Left lung (tissue), 14 donors: ENCODE measurements at regions of chr22 and their contacts with region 1.

Region 1: GRCh38 chr22:31630331-31631329 is 31.4 kb downstream of the PISD start:
- DNase-seq: peak; percentile 57 to 96 (median 83)
- ATAC-seq: peak; percentile 75
- H3K4me3 ChIP-seq: peak overlapping the region; percentile 46 to 78
- H3K27ac ChIP-seq: peak overlapping the region; percentile 89 to 94
- H3K4me1 ChIP-seq: peaks cover 29 to 89% of the 10 kb centered on the region in 2 donors
- H3K27me3 ChIP-seq: no peaks in the 10 kb centered on the region
- CTCF ChIP-seq: no peak

Region 2: GRCh38 chr22:31556627-31557203 is 73.9 kb before region 1 on chr22:
- intact Hi-C with region 1: loop called in 1 of 2 experiments (anchors 5 kb)
- DNase-seq: peak in 1 of 4 donors; percentile 13
- ATAC-seq: peak; percentile 48
- H3K4me3 ChIP-seq: no peak overlapping the region
- H3K27ac ChIP-seq: no peak overlapping the region
- H3K4me1 ChIP-seq: no peaks in the 10 kb centered on the region
- H3K27me3 ChIP-seq: no peaks in the 10 kb centered on the region
- CTCF ChIP-seq: peak in 1 of 2 donors; percentile 32

Region 3: GRCh38 chr22:31872209-31872608 is 241.6 kb after region 1 on chr22:
- intact Hi-C with region 1: no loop called
- DNase-seq: no peak
- ATAC-seq: no peak
- H3K4me3 ChIP-seq: no peak overlapping the region
- H3K27ac ChIP-seq: peak overlapping the region in 1 of 2 donors; percentile 70
- H3K4me1 ChIP-seq: peaks cover 0 to 34% of the 10 kb centered on the region in 2 donors
- H3K27me3 ChIP-seq: no peaks in the 10 kb centered on the region
- CTCF ChIP-seq: no peak